Activated CD4-positive, alpha-beta memory T cell treated with anti-CD3 and anti-CD28 coated beads for 36 hours (primary cell): ENCODE measurements at regions of chr12 and their contacts with region 1.

Region 1: GRCh38 chr12:108803428-108804105 is 53.8 kb downstream of the SSH1 start:
- DNase-seq: peak; percentile 73
- H3K4me3 Mint-ChIP-seq: no peak overlapping the region
- H3K27ac Mint-ChIP-seq: peak overlapping the region; percentile 33
- H3K4me1 Mint-ChIP-seq: peaks cover 7% of the 10 kb centered on the region
- H3K27me3 Mint-ChIP-seq: no peaks in the 10 kb centered on the region

Region 2: DNA sequence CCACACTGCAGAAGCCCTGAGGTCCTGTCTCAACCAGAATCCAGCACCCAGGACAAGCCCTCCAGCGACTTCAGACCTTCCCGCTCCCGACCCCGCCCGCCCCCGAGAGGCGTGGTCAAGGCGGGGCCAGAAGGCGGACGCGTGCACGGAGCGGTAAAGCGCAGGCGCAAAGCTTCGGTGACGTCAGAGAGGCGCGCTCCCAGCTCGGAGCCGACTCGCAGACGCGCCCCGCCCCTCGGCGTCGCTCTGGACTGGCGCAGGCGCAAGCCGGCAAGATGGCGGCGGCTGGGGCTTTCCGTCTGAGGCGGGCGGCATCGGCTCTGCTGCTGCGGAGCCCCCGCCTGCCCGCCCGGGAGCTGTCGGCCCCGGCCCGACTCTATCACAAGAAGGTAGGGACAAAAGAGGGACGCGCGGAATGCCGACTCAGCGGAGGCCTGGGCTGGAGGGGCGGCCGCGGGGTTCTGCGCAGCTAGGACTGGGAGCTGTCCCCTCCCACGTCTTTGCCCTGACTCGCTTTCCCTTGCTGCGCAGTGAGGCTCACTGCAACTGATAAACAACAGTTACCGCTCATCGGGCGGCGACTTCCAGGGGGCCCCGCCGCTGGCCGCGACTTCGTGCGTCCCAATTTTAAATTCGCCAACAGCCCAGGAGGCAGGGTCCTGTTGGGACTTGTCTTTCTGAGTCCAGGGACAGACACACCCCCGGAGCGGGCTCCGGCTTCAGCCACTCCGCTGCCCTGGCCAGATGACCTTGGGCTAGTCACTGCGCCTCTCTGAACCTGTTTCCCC is 241.0 kb before region 1 on chr12 and contains the start of gene ISCU:
- CTCF ChIA-PET with region 1: interaction called, 32 read pairs
- POLR2A ChIA-PET with region 1: no interaction called
- intact Hi-C with region 1: loop called (anchors 2 kb)
- DNase-seq: peak; percentile 99
- H3K4me3 Mint-ChIP-seq: peak within 1 kb of the TSS; percentile 100
- H3K27ac Mint-ChIP-seq: peak within 1 kb of the TSS; percentile 99
- H3K4me1 Mint-ChIP-seq: peaks cover 57% of the 10 kb centered on the region
- H3K27me3 Mint-ChIP-seq: no peaks in the 10 kb centered on the region
- total RNA-seq, gene ISCU: 88.6 to 94.3 TPM

Region 3: DNA sequence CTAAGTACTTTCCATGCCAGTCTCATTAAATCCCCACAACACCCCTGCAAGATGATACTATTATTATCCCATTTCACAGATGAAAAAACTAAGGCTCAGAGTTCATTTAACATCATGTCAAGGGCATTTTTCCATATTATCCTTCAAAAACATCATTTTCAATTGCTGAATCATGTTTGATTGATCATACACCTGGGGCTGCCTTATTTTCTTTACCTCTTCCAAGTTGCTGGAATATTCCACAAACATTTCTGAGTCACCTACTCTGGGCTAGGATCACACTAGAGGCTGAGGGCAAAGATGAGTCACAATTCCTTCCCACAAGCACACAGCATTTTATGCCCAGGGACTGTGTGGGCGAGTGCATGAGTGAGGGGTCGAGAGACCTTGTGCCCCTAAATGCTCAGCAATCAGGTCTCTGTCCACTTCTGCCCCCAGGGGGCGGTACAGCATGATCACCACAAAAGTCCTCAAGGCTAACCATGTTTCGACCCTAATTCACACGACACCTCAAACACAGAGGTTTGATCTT is 191.6 kb before region 1 on chr12:
- CTCF ChIA-PET with region 1: interaction called, 25 read pairs
- POLR2A ChIA-PET with region 1: no interaction called
- intact Hi-C with region 1: loop called (anchors 1 kb)
- DNase-seq: peak; percentile 75
- H3K4me3 Mint-ChIP-seq: no peak overlapping the region
- H3K27ac Mint-ChIP-seq: no peak overlapping the region
- H3K4me1 Mint-ChIP-seq: peaks cover 21% of the 10 kb centered on the region
- H3K27me3 Mint-ChIP-seq: no peaks in the 10 kb centered on the region

Region 4: GRCh38 chr12:108649669-108650068 is 153.9 kb before region 1 on chr12:
- CTCF ChIA-PET with region 1: interaction called, 11 read pairs
- POLR2A ChIA-PET with region 1: no interaction called
- intact Hi-C with region 1: no loop called
- DNase-seq: no peak
- H3K4me3 Mint-ChIP-seq: no peak overlapping the region
- H3K27ac Mint-ChIP-seq: peak overlapping the region; percentile 50
- H3K4me1 Mint-ChIP-seq: peaks cover 38% of the 10 kb centered on the region
- H3K27me3 Mint-ChIP-seq: no peaks in the 10 kb centered on the region

Region 5: GRCh38 chr12:108685469-108686260 is 117.9 kb before region 1 on chr12:
- CTCF ChIA-PET with region 1: interaction called, 21 read pairs
- POLR2A ChIA-PET with region 1: no interaction called
- intact Hi-C with region 1: loop called (anchors 1 kb)
- DNase-seq: no peak
- H3K4me3 Mint-ChIP-seq: no peak overlapping the region
- H3K27ac Mint-ChIP-seq: no peak overlapping the region
- H3K4me1 Mint-ChIP-seq: peaks cover 40% of the 10 kb centered on the region
- H3K27me3 Mint-ChIP-seq: no peaks in the 10 kb centered on the region

Region 6: DNA sequence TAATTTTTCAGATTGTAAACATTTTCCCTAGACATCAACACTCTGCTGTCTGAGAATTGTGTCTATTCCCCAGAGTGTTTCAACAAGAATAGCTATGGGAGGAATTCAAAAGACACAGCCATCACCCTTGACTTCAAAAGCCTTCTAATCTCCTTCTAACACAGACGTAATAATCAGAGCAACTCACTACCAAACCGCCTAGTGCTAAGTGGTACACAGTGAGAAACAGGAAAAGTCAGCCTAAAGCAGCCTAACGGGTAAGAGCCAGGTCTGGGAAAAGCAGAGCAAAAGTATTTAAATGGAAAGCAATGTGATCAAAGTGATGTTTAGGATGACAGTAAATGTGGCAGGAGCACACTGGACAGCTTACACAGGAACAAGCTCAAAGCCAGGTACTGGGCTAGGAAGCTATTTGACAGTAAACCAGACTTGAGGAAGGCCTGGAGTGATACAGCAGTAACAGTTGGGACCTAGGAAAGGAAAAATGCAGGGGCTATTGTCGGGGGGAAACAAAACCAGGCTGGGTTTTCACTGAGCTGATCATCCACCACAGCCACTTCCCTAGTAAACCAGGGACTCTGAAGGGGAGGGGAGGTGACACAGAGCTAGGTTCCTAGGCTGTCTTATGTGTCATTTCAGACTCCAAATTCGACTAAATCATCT is 101.7 kb before region 1 on chr12:
- CTCF ChIA-PET with region 1: interaction called, 20 read pairs
- POLR2A ChIA-PET with region 1: no interaction called
- intact Hi-C with region 1: no loop called
- DNase-seq: peak; percentile 43
- H3K4me3 Mint-ChIP-seq: no peak overlapping the region
- H3K27ac Mint-ChIP-seq: no peak overlapping the region
- H3K4me1 Mint-ChIP-seq: peaks cover 19% of the 10 kb centered on the region
- H3K27me3 Mint-ChIP-seq: no peaks in the 10 kb centered on the region

Region 7: GRCh38 chr12:108950991-108951739 is 147.6 kb after region 1 on chr12:
- CTCF ChIA-PET with region 1: interaction called, 8 read pairs
- POLR2A ChIA-PET with region 1: no interaction called
- intact Hi-C with region 1: loop called (anchors 5 kb)
- DNase-seq: peak; percentile 80
- H3K4me3 Mint-ChIP-seq: no peak overlapping the region
- H3K27ac Mint-ChIP-seq: no peak overlapping the region
- H3K4me1 Mint-ChIP-seq: peaks cover 2% of the 10 kb centered on the region
- H3K27me3 Mint-ChIP-seq: peaks cover 6% of the 10 kb centered on the region

Region 8: GRCh38 chr12:109044241-109044640 is 240.7 kb after region 1 on chr12:
- CTCF ChIA-PET with region 1: no interaction called
- POLR2A ChIA-PET with region 1: no interaction called
- intact Hi-C with region 1: no loop called
- DNase-seq: no peak
- H3K4me3 Mint-ChIP-seq: no peak overlapping the region
- H3K27ac Mint-ChIP-seq: no peak overlapping the region
- H3K4me1 Mint-ChIP-seq: no peaks in the 10 kb centered on the region
- H3K27me3 Mint-ChIP-seq: peaks cover 11% of the 10 kb centered on the region